GM12878 (cell line): ENCODE measurements at regions of chr2 and their contacts with region 1.

Region 1: DNA sequence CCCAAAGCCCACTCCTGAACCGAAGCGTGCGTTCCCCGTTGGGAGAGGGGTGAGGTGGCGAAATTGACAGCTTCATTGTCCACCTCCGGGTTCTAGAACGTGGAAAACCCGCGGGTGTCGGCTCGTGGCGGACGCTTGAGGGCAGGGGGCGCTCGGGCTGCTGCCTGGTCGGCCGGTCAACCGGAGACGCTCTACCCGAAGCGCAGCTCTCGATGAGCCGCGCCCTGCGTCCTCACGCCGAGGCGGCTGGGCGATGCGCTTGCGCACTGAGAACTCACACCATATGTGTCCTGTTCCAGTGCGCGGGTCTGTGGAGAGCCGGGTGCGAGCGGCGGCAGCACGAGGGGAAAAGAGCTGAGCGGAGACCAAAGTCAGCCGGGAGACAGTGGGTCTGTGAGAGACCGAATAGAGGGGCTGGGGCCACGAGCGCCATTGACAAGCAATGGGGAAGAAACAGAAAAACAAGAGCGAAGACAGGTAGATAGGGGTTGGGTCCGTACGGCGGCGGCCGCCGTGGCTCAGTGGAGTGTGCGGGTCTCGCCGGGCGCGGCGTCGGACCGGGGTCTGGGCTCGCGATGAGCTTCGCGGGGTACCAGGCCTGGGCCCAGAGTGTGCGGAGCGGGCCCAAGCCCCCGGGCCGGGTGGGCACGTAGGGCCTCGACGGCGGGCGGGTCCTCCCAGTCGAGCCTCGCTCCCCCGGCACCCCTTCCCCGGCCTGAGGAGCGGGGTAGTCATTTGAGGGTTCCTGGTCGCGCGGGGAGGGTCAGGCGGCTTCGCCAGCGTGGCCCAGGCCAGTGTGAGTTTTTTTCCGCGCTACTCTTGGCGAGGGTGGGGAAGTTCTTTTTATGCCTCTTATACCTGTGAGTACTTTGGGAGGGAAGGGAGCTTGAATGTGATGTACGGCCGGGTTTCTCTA is at the start of gene EIF5B:
- DNase-seq: peak; percentile 90
- ATAC-seq: peak; percentile 87
- H3K4me3 ChIP-seq: peak within 1 kb of the TSS; percentile 89
- H3K27ac ChIP-seq: peak within 1 kb of the TSS; percentile 98
- H3K4me1 ChIP-seq: peaks cover 5% of the 10 kb centered on the region
- H3K27me3 ChIP-seq: no peaks in the 10 kb centered on the region
- CTCF ChIP-seq: peak; percentile 75 to 86 (median 79)
- EP300 ChIP-seq: peak; percentile 5 to 19; a peak in 1 of 4 replicates
- POLR2A ChIP-seq: peak; percentile 95
- RAD21 ChIP-seq: peak; percentile 10; the same call in 1 of the 2 replicates
- polyA plus RNA-seq, gene EIF5B: 38.2 to 52.4 TPM

Region 2: DNA sequence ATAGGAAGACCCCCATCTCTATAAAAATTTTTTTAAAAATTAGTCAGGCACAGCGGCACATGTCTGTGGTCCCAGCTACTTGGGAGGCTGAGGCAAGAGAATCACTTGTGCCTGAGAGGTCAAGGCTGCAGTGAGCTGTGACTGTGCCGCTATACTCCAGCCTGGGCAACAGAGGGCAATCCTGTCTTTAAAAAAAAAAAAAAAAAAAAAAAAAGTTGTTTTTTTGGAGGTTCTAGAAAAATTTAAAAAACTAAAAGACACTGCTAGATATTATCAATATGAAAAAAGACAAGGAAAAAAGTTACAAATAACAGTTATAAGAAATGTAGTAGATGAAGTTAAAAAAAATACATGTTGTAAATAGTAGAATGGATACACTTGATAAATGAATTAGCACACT is 251.9 kb before region 1 on chr2:
- CTCF ChIA-PET with region 1: interaction called, 3 read pairs
- POLR2A ChIA-PET with region 1: no interaction called
- RAD21 ChIA-PET with region 1: no interaction called
- SMC1A ChIA-PET with region 1: no interaction called
- in situ Hi-C with region 1: no loop called
- intact Hi-C with region 1: loop called (anchors 5 kb)
- DNase-seq: no peak
- ATAC-seq: peak; percentile 60
- H3K4me3 ChIP-seq: no peak overlapping the region
- H3K27ac ChIP-seq: no peak overlapping the region
- H3K4me1 ChIP-seq: peaks cover 4% of the 10 kb centered on the region; the same call in 1 of the 2 replicates
- H3K27me3 ChIP-seq: no peaks in the 10 kb centered on the region
- CTCF ChIP-seq: peak; percentile 23 to 38 (median 27); a peak in 3 of 6 replicates
- EP300 ChIP-seq: no peak
- POLR2A ChIP-seq: no peak
- RAD21 ChIP-seq: peak; percentile 47

Region 3: GRCh38 chr2:99154643-99155536 is 182.5 kb before region 1 on chr2 and contains the starts of genes LIPT1 and TSGA10:
- CTCF ChIA-PET with region 1: interaction called, 3 read pairs
- POLR2A ChIA-PET with region 1: interaction called, 3 read pairs
- RAD21 ChIA-PET with region 1: no interaction called
- SMC1A ChIA-PET with region 1: interaction called, 3 read pairs
- in situ Hi-C with region 1: no loop called
- intact Hi-C with region 1: loop called (anchors 1 kb)
- DNase-seq: peak; percentile 69
- ATAC-seq: peak; percentile 94
- H3K4me3 ChIP-seq: peak within 1 kb of the TSS; percentile 78
- H3K27ac ChIP-seq: peak within 1 kb of the TSS; percentile 76
- H3K4me1 ChIP-seq: no peaks in the 10 kb centered on the region
- H3K27me3 ChIP-seq: no peaks in the 10 kb centered on the region
- CTCF ChIP-seq: no peak
- EP300 ChIP-seq: peak; percentile 32 to 55; a peak in 2 of 4 replicates
- POLR2A ChIP-seq: peak; percentile 97
- RAD21 ChIP-seq: no peak
- polyA plus RNA-seq, gene LIPT1: 14.4 to 15.3 TPM
- polyA plus RNA-seq, gene TSGA10: 10.2 to 11.6 TPM

Region 4: DNA sequence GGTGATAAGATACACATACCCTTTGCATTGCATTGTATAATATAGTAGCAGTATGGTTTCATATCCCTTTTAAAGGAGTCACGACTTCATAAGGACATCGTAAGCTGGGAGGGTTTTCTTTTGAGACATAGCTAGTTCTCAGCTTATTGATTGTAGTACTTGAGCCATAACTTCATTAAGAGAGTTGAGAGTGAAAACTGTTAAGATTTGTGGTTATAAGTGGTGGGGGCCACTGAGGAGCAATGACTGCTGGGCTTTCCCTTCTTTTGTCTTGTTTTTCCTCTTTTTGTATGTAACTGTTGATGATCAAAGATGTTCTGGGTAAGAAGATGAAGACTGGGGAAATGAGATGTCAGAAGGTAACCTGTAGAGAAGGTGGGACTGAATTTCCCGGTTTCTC is 10.8 kb after region 1 on chr2:
- CTCF ChIA-PET with region 1: interaction called, 11 read pairs
- POLR2A ChIA-PET with region 1: interaction called, 30 read pairs
- RAD21 ChIA-PET with region 1: interaction called, 29 read pairs
- SMC1A ChIA-PET with region 1: interaction called, 32 read pairs
- in situ Hi-C with region 1: no loop called
- intact Hi-C with region 1: no loop called
- DNase-seq: peak; percentile 39
- ATAC-seq: peak; percentile 86
- H3K4me3 ChIP-seq: no peak overlapping the region
- H3K27ac ChIP-seq: no peak overlapping the region
- H3K4me1 ChIP-seq: peaks cover 13% of the 10 kb centered on the region
- H3K27me3 ChIP-seq: no peaks in the 10 kb centered on the region
- CTCF ChIP-seq: no peak
- EP300 ChIP-seq: peak; percentile 19 to 23; a peak in 2 of 4 replicates
- POLR2A ChIP-seq: no peak
- RAD21 ChIP-seq: no peak

Region 5: DNA sequence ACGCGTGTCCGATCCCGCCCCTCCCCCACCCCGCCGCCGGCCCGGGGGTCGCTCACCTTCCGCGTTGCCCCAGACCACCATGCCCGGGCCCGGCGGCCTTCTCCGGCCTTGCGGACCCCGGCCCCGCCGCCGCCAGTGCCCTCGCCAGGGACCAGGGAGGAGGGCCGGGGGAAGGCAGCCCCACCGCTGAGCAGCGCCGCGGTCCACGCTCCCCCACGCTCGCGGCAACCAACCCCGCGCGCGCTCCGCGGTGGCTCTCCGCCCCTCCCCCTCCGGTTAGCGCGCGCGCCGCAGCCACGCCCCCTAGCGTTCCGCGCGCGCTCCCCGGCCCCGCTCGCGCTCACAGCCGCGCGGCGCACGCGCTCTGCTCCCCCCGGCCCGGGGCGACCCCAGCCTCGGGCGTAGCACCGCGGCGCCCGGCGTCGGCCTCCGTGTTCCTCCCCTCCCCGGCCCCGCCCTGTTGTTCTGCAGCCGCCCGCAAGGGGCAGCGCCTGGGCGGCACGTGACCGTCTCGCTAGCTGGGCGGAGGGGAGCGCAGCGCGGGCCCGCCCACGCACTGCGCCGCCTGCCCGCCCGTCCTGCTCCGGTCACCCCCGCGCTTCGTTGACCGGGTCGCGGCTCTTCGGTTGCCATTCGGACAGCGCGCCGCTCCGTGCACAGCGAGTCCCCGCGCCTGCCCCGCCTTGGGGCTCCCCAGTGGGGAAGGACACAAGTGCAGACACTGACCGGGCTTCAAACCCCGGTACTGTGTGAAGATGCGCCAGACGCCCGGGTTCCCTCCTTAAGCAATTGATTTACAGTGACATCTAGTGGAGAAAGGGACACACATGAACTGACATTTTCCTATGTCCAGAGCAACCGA is 152.6 kb after region 1 on chr2 and contains the start of gene REV1:
- CTCF ChIA-PET with region 1: interaction called, 10 read pairs
- POLR2A ChIA-PET with region 1: no interaction called
- RAD21 ChIA-PET with region 1: interaction called, 3 read pairs
- SMC1A ChIA-PET with region 1: interaction called, 3 read pairs
- in situ Hi-C with region 1: no loop called
- intact Hi-C with region 1: loop called (anchors 1 kb)
- DNase-seq: peak; percentile 72
- ATAC-seq: peak; percentile 89
- H3K4me3 ChIP-seq: peak within 1 kb of the TSS; percentile 79
- H3K27ac ChIP-seq: peak within 1 kb of the TSS; percentile 63
- H3K4me1 ChIP-seq: peaks cover 10% of the 10 kb centered on the region
- H3K27me3 ChIP-seq: no peaks in the 10 kb centered on the region
- CTCF ChIP-seq: peak; percentile 54 to 85 (median 65); a peak in 5 of 6 replicates
- EP300 ChIP-seq: no peak; a peak in 1 of 4 replicates
- POLR2A ChIP-seq: peak; percentile 86
- RAD21 ChIP-seq: peak; percentile 83
- polyA plus RNA-seq, gene REV1: 11.3 to 12.9 TPM